Stomach (tissue), 19 donors: ENCODE measurements at regions of chr20 and their contacts with region 1.

Region 1: DNA sequence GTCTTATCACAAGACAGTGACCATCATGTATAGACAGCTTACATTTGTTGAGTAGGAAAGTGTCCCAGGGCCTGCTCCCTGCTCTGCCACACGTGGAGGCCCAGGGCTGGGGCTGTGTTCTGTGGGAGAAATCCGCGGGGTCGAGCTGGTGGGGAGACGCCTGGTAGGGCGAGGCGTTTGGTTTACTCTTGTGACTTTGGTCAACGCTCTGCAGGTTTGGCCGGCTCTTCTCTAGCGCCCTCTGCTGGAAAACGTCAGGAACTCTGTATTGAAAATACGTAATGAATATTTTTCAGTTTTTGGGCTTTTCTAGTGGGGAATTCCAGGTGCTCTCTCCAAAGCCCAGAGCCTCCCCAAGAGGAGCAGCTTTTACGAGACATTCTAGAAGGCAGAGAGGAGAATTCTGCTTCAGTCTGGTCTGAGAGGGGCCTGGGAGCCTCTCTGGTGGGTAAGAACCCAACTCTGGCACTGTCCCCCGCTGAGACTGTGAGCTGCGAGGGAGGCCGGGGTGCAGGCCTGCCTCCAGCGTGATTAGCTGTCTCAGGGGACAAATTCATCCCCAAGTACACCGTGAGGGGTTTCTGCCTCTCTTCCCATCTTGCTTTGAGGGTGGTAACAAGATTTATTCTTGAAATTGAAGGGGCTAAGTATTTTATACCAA is 112.6 kb upstream of the RALGAPA2 start:
- DNase-seq: peak; percentile 62 to 85
- H3K4me3 ChIP-seq: no peak overlapping the region
- H3K27ac ChIP-seq: no peak overlapping the region
- H3K4me1 ChIP-seq: peaks cover 0 to 8% (median 3%) of the 10 kb centered on the region in 4 donors
- H3K27me3 ChIP-seq: peaks cover 0 to 33% (median 0%) of the 10 kb centered on the region in 3 donors
- CTCF ChIP-seq: peak in 5 of 7 experiments; percentile 45 to 74 (median 66)
- EP300 ChIP-seq: no peak
- POLR2A ChIP-seq: no peak

Region 2: DNA sequence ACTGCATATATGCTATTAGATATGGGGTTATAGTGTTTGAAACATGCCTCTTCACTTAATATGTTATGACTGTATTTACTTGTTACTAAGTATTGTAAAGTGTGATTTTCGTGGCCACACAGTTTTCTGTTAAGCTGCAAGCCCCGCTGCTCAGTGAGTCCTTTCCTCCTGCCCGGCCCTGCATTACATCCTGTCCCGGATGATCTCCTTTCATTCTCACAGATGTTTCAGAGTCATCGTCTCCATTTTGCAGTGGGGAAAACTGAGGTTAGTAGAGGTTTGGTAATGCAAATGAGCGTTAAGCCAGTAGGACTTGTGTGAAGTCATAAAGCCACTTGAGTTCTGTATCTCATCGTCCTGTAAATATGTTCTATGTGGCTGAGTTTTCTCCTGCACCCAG is 617.2 kb before region 1 on chr20:
- intact Hi-C with region 1: no loop called
- DNase-seq: no peak
- H3K4me3 ChIP-seq: no peak overlapping the region
- H3K27ac ChIP-seq: no peak overlapping the region
- H3K4me1 ChIP-seq: peaks cover 0 to 4% (median 0%) of the 10 kb centered on the region in 4 donors
- H3K27me3 ChIP-seq: peaks cover 0 to 4% (median 0%) of the 10 kb centered on the region in 3 donors
- CTCF ChIP-seq: no peak
- EP300 ChIP-seq: no peak
- POLR2A ChIP-seq: no peak

Region 3: GRCh38 chr20:20649945-20650344 is 175.1 kb before region 1 on chr20:
- intact Hi-C with region 1: no loop called
- DNase-seq: no peak
- H3K4me3 ChIP-seq: no peak overlapping the region
- H3K27ac ChIP-seq: no peak overlapping the region
- H3K4me1 ChIP-seq: peaks cover 0 to 22% (median 10%) of the 10 kb centered on the region in 4 donors
- H3K27me3 ChIP-seq: no peaks in the 10 kb centered on the region
- CTCF ChIP-seq: no peak
- EP300 ChIP-seq: no peak
- POLR2A ChIP-seq: no peak

Region 4: DNA sequence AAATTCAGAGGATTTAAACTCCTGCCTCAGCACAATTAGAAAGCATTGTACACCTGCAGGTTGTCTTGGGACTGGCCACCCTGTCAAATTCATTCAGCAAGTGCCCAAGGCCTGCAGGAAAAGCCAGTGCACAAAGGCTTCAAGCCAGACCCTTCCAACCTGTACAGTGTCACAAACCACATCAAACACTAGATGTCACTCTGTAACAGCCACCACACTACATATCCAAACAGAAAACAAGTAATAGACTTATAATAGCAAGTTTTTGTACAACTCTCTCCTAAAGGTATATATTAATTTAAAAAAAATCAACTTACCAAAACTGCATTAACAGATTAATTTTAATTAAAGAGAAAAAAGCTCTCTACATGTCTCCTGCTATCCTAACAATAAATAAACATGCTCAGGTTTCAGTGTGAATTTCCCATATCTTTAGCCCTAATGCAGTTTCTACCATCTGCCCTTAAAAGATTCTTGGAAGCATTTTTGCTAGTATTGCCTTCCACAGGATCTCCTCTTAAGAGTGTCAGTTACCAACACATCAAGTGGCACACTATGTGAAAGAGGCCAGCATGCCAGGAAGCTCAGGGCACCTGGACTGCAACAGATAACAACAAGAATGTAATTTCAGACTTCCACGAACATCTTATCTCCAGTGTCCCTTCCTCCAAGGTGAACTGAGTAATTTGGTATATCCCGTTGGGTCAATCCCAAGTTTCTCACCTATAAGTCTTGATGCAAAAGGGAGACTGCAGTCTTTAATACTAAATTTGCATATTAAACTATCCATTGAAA is 160.1 kb before region 1 on chr20:
- intact Hi-C with region 1: loop called (anchors 10 kb)
- DNase-seq: peak in 1 of 2 donors; percentile 78
- H3K4me3 ChIP-seq: no peak overlapping the region
- H3K27ac ChIP-seq: no peak overlapping the region
- H3K4me1 ChIP-seq: peaks cover 15 to 41% (median 22%) of the 10 kb centered on the region in 4 donors
- H3K27me3 ChIP-seq: no peaks in the 10 kb centered on the region
- CTCF ChIP-seq: peak in 4 of 7 experiments; percentile 27 to 47 (median 40)
- EP300 ChIP-seq: no peak
- POLR2A ChIP-seq: no peak